ENCODE measurements at regions of chr5 and their contacts with region 1.

Region 1: GRCh38 chr5:138035605-138036537 is 3.0 kb upstream of the FAM13B start:
- DNase-seq: peak; percentile 87
- ATAC-seq: peak; percentile 59
- H3K4me3 ChIP-seq: no peak overlapping the region
- H3K27ac ChIP-seq: no peak overlapping the region
- H3K4me1 ChIP-seq: no peaks in the 10 kb centered on the region; the same call in 1 of the 2 replicates
- H3K27me3 ChIP-seq: no peaks in the 10 kb centered on the region
- CTCF ChIP-seq: peak; percentile 99
- POLR2A ChIP-seq: no peak
- RAD21 ChIP-seq: peak; percentile 68

Region 2: DNA sequence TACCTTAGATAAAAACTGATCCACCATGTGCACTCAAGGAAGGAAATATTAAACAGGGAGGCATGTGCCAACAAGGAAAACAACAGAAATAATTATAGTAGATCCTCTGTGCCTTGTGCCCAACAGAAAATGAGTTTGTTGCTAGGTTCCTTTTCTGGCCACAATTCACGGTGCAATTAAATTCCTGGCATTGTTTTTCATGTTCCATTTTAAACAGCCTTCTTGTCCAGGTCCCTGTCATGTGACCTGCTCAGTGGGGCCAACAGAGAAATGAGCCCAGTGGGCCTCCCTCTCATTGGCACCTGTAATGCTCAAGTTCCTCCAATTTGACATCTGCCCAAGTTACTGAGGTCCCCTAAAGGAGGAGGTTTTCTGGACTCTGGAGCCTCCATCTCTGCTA is 593.2 kb before region 1 on chr5:
- CTCF ChIA-PET with region 1: no interaction called
- POLR2A ChIA-PET with region 1: no interaction called
- dilution Hi-C with region 1: no loop called
- in situ Hi-C with region 1: no loop called
- intact Hi-C with region 1: no loop called
- DNase-seq: no peak
- ATAC-seq: no peak
- H3K4me3 ChIP-seq: no peak overlapping the region
- H3K27ac ChIP-seq: no peak overlapping the region
- H3K4me1 ChIP-seq: no peaks in the 10 kb centered on the region
- H3K27me3 ChIP-seq: no peaks in the 10 kb centered on the region
- CTCF ChIP-seq: no peak
- POLR2A ChIP-seq: no peak
- RAD21 ChIP-seq: no peak

Region 3: GRCh38 chr5:137754126-137754960 is 281.5 kb before region 1 on chr5 and contains the start of gene HNRNPA0:
- CTCF ChIA-PET with region 1: interaction called, 3 read pairs
- POLR2A ChIA-PET with region 1: no interaction called
- dilution Hi-C with region 1: no loop called
- in situ Hi-C with region 1: loop called (anchors 10 kb)
- intact Hi-C with region 1: loop called (anchors 2 kb)
- DNase-seq: peak; percentile 97
- ATAC-seq: peak; percentile 96
- H3K4me3 ChIP-seq: peak within 1 kb of the TSS; percentile 61
- H3K27ac ChIP-seq: peak within 1 kb of the TSS; percentile 92
- H3K4me1 ChIP-seq: no peaks in the 10 kb centered on the region; the same call in 1 of the 2 replicates
- H3K27me3 ChIP-seq: no peaks in the 10 kb centered on the region
- CTCF ChIP-seq: 0 out of 2 replicates have a peak, but pooled peaks have one; percentile 1
- POLR2A ChIP-seq: peak; percentile 98
- RAD21 ChIP-seq: no peak
- total RNA-seq, gene HNRNPA0: 5.2 and 8.9 TPM in 2 replicates

Region 4: DNA sequence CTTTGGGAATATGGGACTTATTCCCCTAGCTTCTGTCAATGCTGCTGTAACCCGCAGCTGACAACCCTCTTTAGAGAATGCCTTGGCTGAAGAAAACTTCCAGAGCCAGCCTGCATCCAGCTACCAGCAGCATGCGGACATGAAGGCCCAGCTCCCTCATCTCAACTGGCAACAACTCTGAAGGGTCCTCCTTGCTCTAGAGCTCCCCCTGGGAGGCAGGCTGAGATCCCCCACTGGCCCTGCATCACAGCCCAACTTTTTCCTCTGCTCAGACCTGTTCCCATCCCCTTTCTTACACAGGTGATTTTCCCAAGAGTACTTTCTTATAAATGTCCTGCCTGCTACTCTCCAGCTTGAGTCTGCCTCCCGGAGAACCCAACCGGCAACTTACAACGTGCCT is 29.2 kb after region 1 on chr5:
- CTCF ChIA-PET with region 1: interaction called, 11 read pairs
- POLR2A ChIA-PET with region 1: interaction called, 4 read pairs
- dilution Hi-C with region 1: no loop called
- in situ Hi-C with region 1: no loop called
- intact Hi-C with region 1: loop called (anchors 1 kb)
- DNase-seq: no peak
- ATAC-seq: no peak
- H3K4me3 ChIP-seq: no peak overlapping the region
- H3K27ac ChIP-seq: no peak overlapping the region
- H3K4me1 ChIP-seq: no peaks in the 10 kb centered on the region
- H3K27me3 ChIP-seq: no peaks in the 10 kb centered on the region; the same call in 1 of the 2 replicates
- CTCF ChIP-seq: peak; percentile 22; the same call in 1 of the 2 replicates
- POLR2A ChIP-seq: no peak
- RAD21 ChIP-seq: no peak

Region 5: GRCh38 chr5:138138949-138139780 is 103.3 kb after region 1 on chr5 and contains the start of gene NME5:
- CTCF ChIA-PET with region 1: interaction called, 3 read pairs
- POLR2A ChIA-PET with region 1: no interaction called
- dilution Hi-C with region 1: no loop called
- in situ Hi-C with region 1: loop called (anchors 25 kb)
- intact Hi-C with region 1: no loop called
- DNase-seq: peak; percentile 40
- ATAC-seq: peak; percentile 88
- H3K4me3 ChIP-seq: peak within 1 kb of the TSS; percentile 41
- H3K27ac ChIP-seq: no peak within 1 kb of the TSS
- H3K4me1 ChIP-seq: no peaks in the 10 kb centered on the region
- H3K27me3 ChIP-seq: no peaks in the 10 kb centered on the region; the same call in 1 of the 2 replicates
- CTCF ChIP-seq: no peak
- POLR2A ChIP-seq: no peak
- RAD21 ChIP-seq: no peak
- total RNA-seq, gene NME5: under 0.01 and 0.18 TPM in 2 replicates

Region 6: GRCh38 chr5:138159666-138160065 is 123.8 kb after region 1 on chr5:
- CTCF ChIA-PET with region 1: no interaction called
- POLR2A ChIA-PET with region 1: no interaction called
- dilution Hi-C with region 1: no loop called
- in situ Hi-C with region 1: no loop called
- intact Hi-C with region 1: no loop called
- DNase-seq: no peak
- ATAC-seq: no peak
- H3K4me3 ChIP-seq: no peak overlapping the region
- H3K27ac ChIP-seq: no peak overlapping the region
- H3K4me1 ChIP-seq: no peaks in the 10 kb centered on the region
- H3K27me3 ChIP-seq: no peaks in the 10 kb centered on the region
- CTCF ChIP-seq: no peak
- POLR2A ChIP-seq: no peak
- RAD21 ChIP-seq: no peak